CD4-positive, alpha-beta memory T cell (primary cell): ENCODE measurements at regions of chr17 and their contacts with region 1.

Region 1: GRCh38 chr17:68172461-68172954 is 75.3 kb upstream of the AMZ2 start:
- DNase-seq: peak; percentile 67 to 78 (median 68)
- H3K4me3 ChIP-seq: no peak overlapping the region
- H3K4me3 Mint-ChIP-seq: no peak overlapping the region
- H3K27ac ChIP-seq: no peak overlapping the region
- H3K27ac Mint-ChIP-seq: no peak overlapping the region
- H3K4me1 ChIP-seq: peaks cover 3% of the 10 kb centered on the region
- H3K4me1 Mint-ChIP-seq: peaks cover 8 to 17% (median 10%) of the 10 kb centered on the region in 4 donors
- H3K27me3 ChIP-seq: no peaks in the 10 kb centered on the region
- H3K27me3 Mint-ChIP-seq: no peaks in the 10 kb centered on the region

Region 2: DNA sequence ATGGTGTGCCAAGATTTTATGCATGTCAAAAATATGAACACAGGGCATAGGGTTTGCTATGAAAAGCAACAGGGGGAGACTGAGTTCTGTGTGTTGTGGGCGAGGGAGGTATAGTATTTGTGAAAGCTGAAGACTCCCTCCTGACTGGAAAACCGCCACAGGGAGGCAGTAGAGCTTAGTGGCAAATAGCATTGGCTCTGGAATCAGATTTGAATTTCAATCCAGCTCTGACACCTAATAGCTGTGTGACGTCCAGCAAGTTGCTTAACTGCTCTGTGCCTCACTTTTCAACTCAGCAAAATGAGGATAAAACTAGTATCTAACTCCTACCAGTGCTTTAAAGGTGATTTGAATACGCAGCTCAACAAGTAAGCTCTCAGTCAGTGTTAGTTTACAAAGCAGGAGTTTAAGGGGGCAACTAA is 115.0 kb before region 1 on chr17:
- CTCF ChIA-PET with region 1: interaction called, 5 read pairs
- POLR2A ChIA-PET with region 1: no interaction called
- intact Hi-C with region 1: loop called (anchors 10 kb)
- DNase-seq: peak; percentile 43 to 63 (median 51)
- H3K4me3 ChIP-seq: no peak overlapping the region
- H3K4me3 Mint-ChIP-seq: no peak overlapping the region
- H3K27ac ChIP-seq: no peak overlapping the region
- H3K27ac Mint-ChIP-seq: no peak overlapping the region
- H3K4me1 ChIP-seq: peaks cover 5% of the 10 kb centered on the region
- H3K4me1 Mint-ChIP-seq: peaks cover 0 to 19% (median 4%) of the 10 kb centered on the region in 4 donors
- H3K27me3 ChIP-seq: no peaks in the 10 kb centered on the region
- H3K27me3 Mint-ChIP-seq: no peaks in the 10 kb centered on the region

Region 3: GRCh38 chr17:68089887-68090286 is 82.6 kb before region 1 on chr17:
- CTCF ChIA-PET with region 1: no interaction called
- POLR2A ChIA-PET with region 1: no interaction called
- intact Hi-C with region 1: no loop called
- DNase-seq: no peak
- H3K4me3 ChIP-seq: no peak overlapping the region
- H3K4me3 Mint-ChIP-seq: no peak overlapping the region
- H3K27ac ChIP-seq: no peak overlapping the region
- H3K27ac Mint-ChIP-seq: peak overlapping the region in 1 of 7 donors; percentile 63
- H3K4me1 ChIP-seq: peaks cover 37% of the 10 kb centered on the region
- H3K4me1 Mint-ChIP-seq: peaks cover 31 to 50% (median 42%) of the 10 kb centered on the region in 4 donors
- H3K27me3 ChIP-seq: no peaks in the 10 kb centered on the region
- H3K27me3 Mint-ChIP-seq: no peaks in the 10 kb centered on the region

Region 4: DNA sequence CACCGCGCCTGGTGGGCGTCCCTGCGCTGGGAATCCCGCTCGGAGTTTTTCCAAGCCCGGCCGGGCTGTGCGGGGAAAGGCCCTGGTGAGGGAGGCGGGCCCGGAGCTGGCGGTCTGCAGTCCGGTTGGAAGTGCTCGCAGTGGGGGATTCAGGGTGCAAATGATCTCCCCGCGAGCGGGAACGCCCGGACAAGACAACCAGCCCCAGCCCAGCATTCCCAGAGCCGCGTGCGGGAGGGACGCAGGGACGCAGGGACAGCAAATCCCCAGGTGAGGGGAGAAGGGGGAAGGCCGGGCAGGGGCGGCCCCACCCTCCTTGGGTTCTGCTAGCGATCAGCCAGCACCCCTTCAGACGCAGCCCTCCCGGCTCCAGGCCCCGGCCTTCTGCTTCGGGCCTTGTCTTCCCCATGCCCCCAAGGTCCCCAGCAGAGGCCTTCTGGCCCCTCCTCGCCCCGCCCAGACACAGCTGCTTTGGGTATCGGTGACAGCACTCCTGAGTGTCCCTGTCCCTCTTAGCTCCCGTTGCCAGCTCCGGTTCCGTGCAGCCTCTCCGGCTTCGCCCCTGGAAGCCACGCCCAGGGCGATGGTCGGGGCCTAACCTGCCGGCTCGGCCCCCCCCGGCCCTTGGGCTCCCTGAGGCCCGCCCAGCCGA is 24.6 kb after region 1 on chr17:
- CTCF ChIA-PET with region 1: interaction called, 221 read pairs
- POLR2A ChIA-PET with region 1: interaction called, 49 read pairs
- intact Hi-C with region 1: loop called (anchors 1 kb)
- DNase-seq: peak in 3 of 5 donors; percentile 22 to 65 (median 44)
- H3K4me3 ChIP-seq: peak overlapping the region; percentile 36 to 74
- H3K4me3 Mint-ChIP-seq: peak overlapping the region; percentile 77 to 87 (median 82)
- H3K27ac ChIP-seq: peak overlapping the region; percentile 54
- H3K27ac Mint-ChIP-seq: peak overlapping the region in 2 of 7 donors; percentile 63 to 94
- H3K4me1 ChIP-seq: peaks cover 48% of the 10 kb centered on the region
- H3K4me1 Mint-ChIP-seq: peaks cover 19 to 51% (median 31%) of the 10 kb centered on the region in 4 donors
- H3K27me3 ChIP-seq: no peaks in the 10 kb centered on the region
- H3K27me3 Mint-ChIP-seq: no peaks in the 10 kb centered on the region

Region 5: DNA sequence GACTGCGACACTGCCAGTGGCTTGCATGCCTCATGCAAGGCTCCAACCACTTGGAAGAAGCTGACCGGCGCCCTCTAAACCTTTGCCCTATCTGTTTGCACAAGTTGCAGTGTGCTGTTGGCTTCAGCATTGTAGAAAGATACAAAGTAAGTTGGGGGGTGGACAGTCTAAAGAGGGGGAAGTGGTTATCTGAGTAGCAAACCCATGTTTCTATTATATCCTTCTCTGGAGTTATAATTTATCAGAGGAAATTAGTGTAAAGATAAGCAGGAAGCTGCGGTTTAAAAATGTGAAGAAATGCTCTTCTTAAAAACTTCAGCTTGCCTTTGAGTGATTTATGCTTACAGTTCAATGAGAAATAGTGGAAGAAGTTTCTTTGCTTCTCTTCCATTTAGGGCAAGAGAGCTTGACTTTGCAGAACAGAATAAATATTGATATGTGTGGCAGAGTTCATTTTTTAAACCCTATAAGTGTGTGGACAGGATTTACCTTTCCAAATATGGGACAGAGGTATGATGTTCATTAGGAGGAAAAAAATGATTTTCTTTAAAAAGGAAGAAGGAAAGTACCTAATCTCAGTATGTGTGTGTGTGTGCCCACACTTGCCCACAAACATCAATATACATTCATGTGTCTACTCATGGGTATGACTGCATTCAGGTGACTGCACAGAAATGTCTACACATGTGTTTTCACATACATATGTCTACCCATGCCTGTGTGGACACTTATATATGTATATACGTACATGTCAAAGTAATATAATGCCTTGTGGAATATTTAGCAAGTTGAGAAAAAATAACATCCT is 83.4 kb after region 1 on chr17:
- CTCF ChIA-PET with region 1: interaction called, 5 read pairs
- POLR2A ChIA-PET with region 1: interaction called, 3 read pairs
- intact Hi-C with region 1: loop called (anchors 1 kb)
- DNase-seq: peak; percentile 50 to 73 (median 60)
- H3K4me3 ChIP-seq: no peak overlapping the region
- H3K4me3 Mint-ChIP-seq: peak overlapping the region; percentile 46 to 73 (median 66)
- H3K27ac ChIP-seq: peak overlapping the region; percentile 88
- H3K27ac Mint-ChIP-seq: peak overlapping the region; percentile 81 to 99 (median 98)
- H3K4me1 ChIP-seq: peaks cover 86% of the 10 kb centered on the region
- H3K4me1 Mint-ChIP-seq: peaks cover 61 to 85% (median 72%) of the 10 kb centered on the region in 4 donors
- H3K27me3 ChIP-seq: no peaks in the 10 kb centered on the region
- H3K27me3 Mint-ChIP-seq: no peaks in the 10 kb centered on the region

Region 6: GRCh38 chr17:68463211-68464019 is 290.9 kb after region 1 on chr17:
- CTCF ChIA-PET with region 1: interaction called, 19 read pairs
- POLR2A ChIA-PET with region 1: interaction called, 3 read pairs
- intact Hi-C with region 1: loop called (anchors 1 kb)
- DNase-seq: no peak
- H3K4me3 ChIP-seq: no peak overlapping the region
- H3K4me3 Mint-ChIP-seq: peak overlapping the region in 1 of 8 donors; percentile 59
- H3K27ac ChIP-seq: no peak overlapping the region
- H3K27ac Mint-ChIP-seq: peak overlapping the region in 5 of 7 donors; percentile 18 to 90 (median 66)
- H3K4me1 ChIP-seq: peaks cover 41% of the 10 kb centered on the region
- H3K4me1 Mint-ChIP-seq: peaks cover 34 to 47% (median 39%) of the 10 kb centered on the region in 4 donors
- H3K27me3 ChIP-seq: no peaks in the 10 kb centered on the region
- H3K27me3 Mint-ChIP-seq: no peaks in the 10 kb centered on the region